ENCODE measurements at regions of chr11 and their contacts with region 1.

Region 1: DNA sequence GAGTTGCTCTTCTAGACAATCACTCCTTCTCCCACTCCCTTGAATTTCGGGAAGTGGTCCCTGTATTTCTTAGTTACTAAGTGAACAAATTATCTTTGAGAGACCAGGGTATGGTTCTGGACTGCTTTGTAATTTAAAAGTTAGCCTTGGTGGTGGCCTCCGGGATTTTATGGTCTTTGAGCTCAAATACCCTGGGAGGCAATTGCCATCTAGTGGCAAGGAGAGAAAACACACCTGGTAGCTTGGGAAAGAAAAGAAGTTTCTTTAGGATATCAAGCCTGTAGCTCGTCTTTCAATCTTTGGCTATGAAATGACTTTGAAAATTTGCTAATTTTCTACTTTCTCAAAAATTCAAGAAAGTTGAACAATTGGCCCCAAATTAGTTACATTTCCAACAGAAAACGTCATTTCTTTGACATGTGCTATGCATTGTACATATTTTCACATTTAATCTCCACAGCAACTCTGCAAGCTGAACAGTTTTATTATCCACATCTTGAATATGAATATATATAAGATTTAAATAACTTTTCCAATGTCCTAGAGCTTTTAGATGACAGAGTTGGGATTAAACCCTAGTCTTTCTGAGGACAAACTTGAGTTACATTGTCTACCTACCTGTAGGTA is 39.1 kb downstream of the MMP27 start:
- DNase-seq: no peak
- ATAC-seq: peak; percentile 76
- H3K4me3 ChIP-seq: no peak overlapping the region
- H3K27ac ChIP-seq: no peak overlapping the region
- H3K4me1 ChIP-seq: no peaks in the 10 kb centered on the region
- H3K27me3 ChIP-seq: peaks cover 0 to 3% of the 10 kb centered on the region in 2 experiments; a peak in 1 of 4 replicates
- CTCF ChIP-seq: peak; percentile 81 to 87 (median 82)
- EP300 ChIP-seq: no peak
- POLR2A ChIP-seq: no peak
- RAD21 ChIP-seq: peak; percentile 97

Region 2: DNA sequence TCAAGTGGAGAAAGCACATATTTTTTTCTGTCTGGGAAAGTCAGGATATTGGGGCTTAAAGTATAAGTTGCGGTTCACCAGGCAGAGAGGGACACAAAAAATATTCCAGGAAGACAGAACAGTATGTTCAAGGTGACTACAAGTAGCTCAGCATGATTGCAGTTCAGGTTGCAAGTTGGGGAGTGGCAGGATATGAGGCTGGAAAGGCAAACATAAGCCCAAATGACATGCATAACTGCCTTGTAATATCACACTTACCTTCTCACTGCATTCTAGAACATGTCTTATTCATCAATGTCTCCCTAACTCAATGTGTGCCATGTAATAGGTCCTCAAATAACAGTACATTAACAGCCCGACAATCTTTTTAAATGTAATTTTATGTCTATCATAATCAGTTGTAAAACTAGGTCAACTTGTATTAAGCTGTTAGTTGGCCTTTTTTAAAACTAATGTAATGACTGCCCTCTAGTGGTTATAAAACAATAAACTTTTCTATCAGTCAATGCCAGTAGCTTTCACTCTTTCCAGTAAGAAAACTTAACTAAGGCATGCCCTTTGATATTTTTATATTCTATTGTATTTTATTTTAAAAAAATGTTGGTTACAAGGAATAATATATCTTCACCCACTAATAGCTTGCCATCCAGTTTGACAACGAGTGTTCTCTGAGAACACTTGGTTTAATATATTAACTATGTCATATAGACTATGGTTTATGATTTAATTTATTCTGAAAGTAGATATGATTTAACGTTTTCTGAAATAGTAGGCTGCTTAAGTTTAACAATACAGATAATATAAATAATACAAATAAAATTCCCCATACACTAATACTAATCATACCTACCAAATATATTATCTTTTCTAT is 658.6 kb before region 1 on chr11:
- CTCF ChIA-PET with region 1: interaction called, 7 read pairs
- POLR2A ChIA-PET with region 1: no interaction called
- RAD21 ChIA-PET with region 1: interaction called, 12 read pairs
- SMC1A ChIA-PET with region 1: interaction called, 5 read pairs
- in situ Hi-C with region 1: no loop called
- intact Hi-C with region 1: no loop called
- DNase-seq: peak; percentile 1
- ATAC-seq: peak; percentile 82
- H3K4me3 ChIP-seq: no peak overlapping the region
- H3K27ac ChIP-seq: no peak overlapping the region
- H3K4me1 ChIP-seq: no peaks in the 10 kb centered on the region
- H3K27me3 ChIP-seq: peaks cover 0 to 4% of the 10 kb centered on the region in 2 experiments; a peak in 2 of 4 replicates
- CTCF ChIP-seq: peak; percentile 26 to 58 (median 28); a peak in 3 of 6 replicates
- EP300 ChIP-seq: no peak
- POLR2A ChIP-seq: no peak
- RAD21 ChIP-seq: peak; percentile 49

Region 3: DNA sequence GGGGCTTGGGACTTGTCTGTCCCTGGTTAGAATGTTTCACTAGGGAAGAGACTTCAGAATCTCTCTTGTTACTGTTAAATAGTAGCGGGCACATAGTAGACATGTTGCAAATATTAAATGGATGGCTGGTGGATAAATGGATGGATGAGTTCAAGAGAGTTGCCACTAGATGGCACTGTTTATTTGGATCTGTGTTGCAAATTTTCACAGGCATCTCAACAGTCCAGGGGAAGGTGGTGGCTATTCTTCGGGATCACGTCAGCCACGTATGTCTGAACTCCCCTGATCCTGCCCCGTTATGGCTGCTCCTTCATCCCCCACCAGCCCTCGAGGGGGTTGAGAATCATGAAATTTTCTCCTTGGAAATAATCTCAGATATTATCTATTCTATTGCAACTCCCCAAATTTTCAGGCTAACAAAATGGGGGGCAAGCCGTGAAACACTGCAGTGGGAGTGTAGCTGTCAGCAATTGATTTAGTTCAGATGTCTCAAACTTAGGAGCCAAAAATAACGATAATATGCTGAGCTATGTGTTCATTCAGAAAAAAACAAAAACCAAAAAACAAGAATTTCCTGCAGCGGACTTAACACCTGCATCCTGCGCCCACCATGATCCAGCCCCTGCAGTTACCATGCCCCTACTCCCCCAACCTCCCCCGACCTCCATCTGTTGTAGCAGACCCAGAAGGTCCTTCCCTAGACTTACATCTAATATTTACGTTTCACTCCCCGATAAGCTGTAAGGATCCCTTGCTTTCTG is 378.3 kb before region 1 on chr11:
- CTCF ChIA-PET with region 1: interaction called, 91 read pairs
- POLR2A ChIA-PET with region 1: no interaction called
- RAD21 ChIA-PET with region 1: interaction called, 49 read pairs
- SMC1A ChIA-PET with region 1: interaction called, 48 read pairs
- in situ Hi-C with region 1: no loop called
- intact Hi-C with region 1: loop called (anchors 1 kb)
- DNase-seq: peak; percentile 78
- ATAC-seq: peak; percentile 94
- H3K4me3 ChIP-seq: peak overlapping the region; percentile 43; the same call in 1 of the 2 replicates
- H3K27ac ChIP-seq: no peak overlapping the region
- H3K4me1 ChIP-seq: no peaks in the 10 kb centered on the region
- H3K27me3 ChIP-seq: no peaks in the 10 kb centered on the region
- CTCF ChIP-seq: peak; percentile 62 to 83 (median 67)
- EP300 ChIP-seq: no peak
- POLR2A ChIP-seq: no peak
- RAD21 ChIP-seq: peak; percentile 84

Region 4: GRCh38 chr11:102332611-102332994 is 333.8 kb before region 1 on chr11:
- CTCF ChIA-PET with region 1: interaction called, 12 read pairs
- POLR2A ChIA-PET with region 1: no interaction called
- RAD21 ChIA-PET with region 1: interaction called, 6 read pairs
- SMC1A ChIA-PET with region 1: interaction called, 7 read pairs
- in situ Hi-C with region 1: no loop called
- intact Hi-C with region 1: no loop called
- DNase-seq: no peak
- ATAC-seq: peak; percentile 32
- H3K4me3 ChIP-seq: no peak overlapping the region
- H3K27ac ChIP-seq: no peak overlapping the region
- H3K4me1 ChIP-seq: no peaks in the 10 kb centered on the region; the same call in 1 of the 2 replicates
- H3K27me3 ChIP-seq: no peaks in the 10 kb centered on the region
- CTCF ChIP-seq: no peak
- EP300 ChIP-seq: no peak
- POLR2A ChIP-seq: 0 out of 2 replicates have a peak, but pooled peaks have one; percentile 2
- RAD21 ChIP-seq: no peak

Region 5: DNA sequence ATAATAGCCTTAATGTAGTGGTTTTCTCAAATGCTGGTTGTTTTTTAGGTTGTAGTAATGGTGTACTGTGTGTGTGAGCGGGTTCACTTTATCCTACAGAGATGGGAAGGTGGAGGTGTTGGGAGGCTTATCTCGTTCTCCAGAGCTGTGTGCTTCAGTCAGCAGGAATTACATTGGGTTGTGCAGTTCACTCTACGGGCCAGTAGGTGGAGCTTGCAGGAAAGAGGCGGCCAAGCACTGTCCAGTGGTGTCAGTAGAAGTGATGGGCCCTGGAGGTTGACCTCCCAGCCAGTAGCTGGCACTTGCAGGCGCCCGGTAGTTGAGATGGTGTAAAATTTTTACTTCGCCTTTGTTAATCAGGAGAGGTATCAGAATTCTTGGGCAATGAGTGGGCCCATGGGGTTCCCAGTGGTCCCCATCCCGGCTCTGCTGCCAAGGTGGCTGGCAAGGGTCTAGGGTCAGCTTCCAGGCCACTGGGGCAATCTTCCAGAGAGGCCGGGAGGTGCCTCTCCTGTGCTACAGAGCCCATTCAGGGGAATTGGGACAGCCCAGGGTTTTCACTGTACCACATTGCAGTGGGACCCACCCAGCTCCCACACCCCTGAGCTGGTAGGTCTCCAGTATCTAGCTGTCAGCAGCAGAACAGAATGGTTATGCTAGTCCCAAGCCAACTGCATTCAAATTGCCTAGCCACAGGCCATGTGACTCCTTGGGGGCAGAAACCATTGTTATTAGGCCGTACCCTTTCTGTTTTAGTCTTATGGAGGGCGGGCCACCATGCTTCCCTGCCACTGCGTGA is 275.6 kb before region 1 on chr11:
- CTCF ChIA-PET with region 1: interaction called, 46 read pairs
- POLR2A ChIA-PET with region 1: no interaction called
- RAD21 ChIA-PET with region 1: interaction called, 17 read pairs
- SMC1A ChIA-PET with region 1: interaction called, 25 read pairs
- in situ Hi-C with region 1: no loop called
- intact Hi-C with region 1: loop called (anchors 2 kb)
- DNase-seq: no peak
- ATAC-seq: peak; percentile 93
- H3K4me3 ChIP-seq: no peak overlapping the region
- H3K27ac ChIP-seq: no peak overlapping the region
- H3K4me1 ChIP-seq: no peaks in the 10 kb centered on the region; the same call in 1 of the 2 replicates
- H3K27me3 ChIP-seq: no peaks in the 10 kb centered on the region
- CTCF ChIP-seq: peak; percentile 82 to 91 (median 89)
- EP300 ChIP-seq: no peak
- POLR2A ChIP-seq: no peak
- RAD21 ChIP-seq: peak; percentile 76

Region 6: DNA sequence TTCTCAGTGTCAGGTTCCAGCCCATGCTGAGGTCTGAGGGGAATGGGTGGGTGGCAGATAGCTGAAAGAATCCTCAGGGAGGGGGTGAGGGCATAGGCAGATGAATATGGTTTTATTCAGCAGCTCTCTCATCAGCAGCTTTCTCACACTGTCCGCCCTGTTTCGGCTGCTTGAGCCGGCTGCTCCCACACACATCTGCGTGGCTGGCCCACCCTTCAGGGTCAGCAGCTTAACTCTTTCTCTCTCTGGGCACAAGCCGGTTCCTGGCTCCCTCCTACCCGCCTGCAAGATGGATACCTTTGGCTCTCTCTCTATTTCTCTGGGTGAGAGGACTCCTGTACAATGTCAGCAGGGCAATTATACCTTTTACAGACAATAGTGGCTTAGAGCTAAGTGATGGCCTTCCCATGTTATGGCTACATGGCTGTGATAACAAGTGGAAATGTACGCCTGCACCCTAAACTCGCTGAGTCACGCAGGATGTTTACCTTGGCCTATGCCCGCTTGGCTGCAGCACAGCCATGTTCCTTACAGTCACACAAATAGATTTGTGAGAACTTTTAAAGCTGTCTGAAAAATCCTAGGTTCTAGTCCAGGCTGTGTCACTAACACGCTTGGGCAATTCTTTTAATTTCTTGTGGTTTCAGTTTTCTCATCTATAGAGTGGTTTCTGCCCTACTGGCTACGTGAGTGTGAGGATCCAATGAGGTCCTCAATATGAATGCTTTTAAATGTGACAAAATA is 45.5 kb before region 1 on chr11:
- CTCF ChIA-PET with region 1: interaction called, 196 read pairs
- POLR2A ChIA-PET with region 1: no interaction called
- RAD21 ChIA-PET with region 1: interaction called, 106 read pairs
- SMC1A ChIA-PET with region 1: interaction called, 98 read pairs
- in situ Hi-C with region 1: no loop called
- intact Hi-C with region 1: loop called (anchors 2 kb)
- DNase-seq: no peak
- ATAC-seq: peak; percentile 90
- H3K4me3 ChIP-seq: no peak overlapping the region
- H3K27ac ChIP-seq: no peak overlapping the region
- H3K4me1 ChIP-seq: 0 out of 2 replicates have a peak, but pooled peaks cover 5% of the 10 kb centered on the region
- H3K27me3 ChIP-seq: peaks cover 3 to 8% of the 10 kb centered on the region in 2 experiments; a peak in 2 of 4 replicates
- CTCF ChIP-seq: no peak
- EP300 ChIP-seq: no peak
- POLR2A ChIP-seq: no peak
- RAD21 ChIP-seq: no peak